ENCODE measurements at regions of chr6 and their contacts with region 1.

Region 1: GRCh38 chr6:121521892-121522664 is 86.6 kb downstream of the GJA1 start:
- DNase-seq: peak in 1 of 2 donors; percentile 87
- H3K4me3 ChIP-seq: peak overlapping the region in 1 of 2 donors; percentile 44
- H3K27ac ChIP-seq: peak overlapping the region; percentile 86 to 89
- H3K4me1 ChIP-seq: peaks cover 9 to 45% of the 10 kb centered on the region in 2 donors
- H3K27me3 ChIP-seq: no peaks in the 10 kb centered on the region
- CTCF ChIP-seq: no peak

Region 2: GRCh38 chr6:121504227-121504626 is 17.9 kb before region 1 on chr6:
- intact Hi-C with region 1: loop called (anchors 2 kb)
- DNase-seq: no peak
- H3K4me3 ChIP-seq: no peak overlapping the region
- H3K27ac ChIP-seq: peak overlapping the region; percentile 59 to 63
- H3K4me1 ChIP-seq: peaks cover 0 to 16% of the 10 kb centered on the region in 2 donors
- H3K27me3 ChIP-seq: no peaks in the 10 kb centered on the region
- CTCF ChIP-seq: no peak

Region 3: GRCh38 chr6:121549716-121550115 is 27.6 kb after region 1 on chr6:
- intact Hi-C with region 1: loop called (anchors 2 kb)
- DNase-seq: no peak
- H3K4me3 ChIP-seq: no peak overlapping the region
- H3K27ac ChIP-seq: peak overlapping the region; percentile 66 to 67
- H3K4me1 ChIP-seq: peaks cover 3 to 21% of the 10 kb centered on the region in 2 donors
- H3K27me3 ChIP-seq: no peaks in the 10 kb centered on the region
- CTCF ChIP-seq: no peak

Region 4: DNA sequence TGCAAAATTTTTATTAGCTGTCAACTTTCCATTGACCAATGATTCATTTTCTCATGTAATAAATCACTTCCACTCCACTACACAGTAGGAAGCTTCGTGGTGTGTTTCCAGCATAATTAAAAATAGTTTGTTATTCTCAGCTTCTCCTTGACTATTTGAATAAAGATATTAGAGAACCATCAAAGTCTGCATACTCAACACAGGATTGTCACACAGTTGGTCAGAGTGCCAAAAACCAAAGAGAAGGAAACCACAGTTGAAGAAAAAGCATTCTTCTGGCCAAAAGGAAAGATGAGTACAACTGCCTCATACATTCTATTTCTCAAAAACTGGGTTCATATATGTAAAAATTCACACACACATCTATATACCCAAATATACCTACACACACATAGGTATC is 422.3 kb after region 1 on chr6:
- intact Hi-C with region 1: loop called (anchors 10 kb)
- DNase-seq: no peak
- H3K4me3 ChIP-seq: no peak overlapping the region
- H3K27ac ChIP-seq: no peak overlapping the region
- H3K4me1 ChIP-seq: no peaks in the 10 kb centered on the region
- H3K27me3 ChIP-seq: no peaks in the 10 kb centered on the region
- CTCF ChIP-seq: no peak

Measured in ascending aorta (tissue), 2 donors.